H1 (cell line): ENCODE measurements at regions of chr7 and their contacts with region 1.

Region 1: DNA sequence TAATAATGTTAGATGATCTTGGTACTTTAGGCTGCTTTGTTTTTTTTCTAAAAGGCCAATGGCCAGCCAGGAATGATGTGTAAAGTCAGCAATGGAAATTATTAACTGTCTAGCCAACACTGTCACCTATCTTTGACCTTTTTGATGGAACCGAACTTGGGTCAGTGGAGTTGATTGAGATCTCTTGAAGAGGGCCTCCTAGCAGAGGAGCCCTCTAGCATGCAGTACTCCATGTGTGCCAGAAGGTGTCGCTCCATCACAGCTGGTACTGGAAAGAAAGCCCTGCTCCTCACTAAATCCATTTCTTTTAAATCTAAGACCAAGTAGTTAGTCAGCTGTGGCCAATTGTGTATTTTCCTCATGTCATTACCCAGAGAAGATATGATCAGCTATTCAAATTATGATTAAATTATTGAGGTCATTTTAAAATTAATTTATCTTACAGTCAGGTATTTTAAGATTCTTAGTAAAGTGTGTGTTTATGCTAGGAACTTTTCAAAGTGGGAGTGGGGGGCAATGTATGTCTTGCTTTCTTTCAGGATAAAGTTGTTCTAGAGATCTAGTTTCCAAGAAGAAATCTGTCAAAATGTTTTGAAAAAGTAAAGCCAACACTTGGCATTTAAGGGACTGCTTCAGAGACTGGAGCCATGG is 33.1 kb upstream of the CROT start:
- DNase-seq: peak; percentile 9 to 58
- H3K4me3 ChIP-seq: no peak overlapping the region
- H3K27ac ChIP-seq: no peak overlapping the region
- H3K4me1 ChIP-seq: no peaks in the 10 kb centered on the region
- H3K27me3 ChIP-seq: no peaks in the 10 kb centered on the region
- CTCF ChIP-seq: peak; percentile 87 to 96 (median 92)
- EP300 ChIP-seq: no peak
- POLR2A ChIP-seq: no peak
- RAD21 ChIP-seq: peak; percentile 98

Region 2: DNA sequence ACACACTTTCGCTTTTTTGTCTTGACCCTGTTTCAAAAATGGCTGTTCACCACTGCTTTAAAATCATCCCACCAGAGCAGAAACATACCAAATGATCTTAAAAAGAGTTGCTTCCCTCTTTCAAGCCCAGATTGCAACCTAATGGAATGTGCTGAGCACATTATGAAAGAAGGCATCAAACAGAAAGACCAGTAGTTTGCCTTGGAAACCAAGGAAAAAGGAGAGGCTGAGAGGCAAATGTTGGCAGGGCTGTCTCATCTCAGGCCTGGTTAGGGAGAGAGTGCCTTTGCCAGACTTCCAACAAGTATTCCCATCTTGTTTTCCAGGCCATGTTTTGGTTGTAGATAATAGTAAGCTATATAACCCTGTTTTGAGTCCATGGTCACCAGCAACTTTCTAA is 98.8 kb after region 1 on chr7:
- CTCF ChIA-PET with region 1: interaction called, 115 read pairs
- POLR2A ChIA-PET with region 1: no interaction called
- DNase-seq: no peak
- H3K4me3 ChIP-seq: no peak overlapping the region
- H3K27ac ChIP-seq: no peak overlapping the region
- H3K4me1 ChIP-seq: no peaks in the 10 kb centered on the region
- H3K27me3 ChIP-seq: no peaks in the 10 kb centered on the region
- CTCF ChIP-seq: no peak
- EP300 ChIP-seq: no peak
- POLR2A ChIP-seq: no peak
- RAD21 ChIP-seq: no peak